ENCODE measurements at regions of chr1 and their contacts with region 1.

Region 1: DNA sequence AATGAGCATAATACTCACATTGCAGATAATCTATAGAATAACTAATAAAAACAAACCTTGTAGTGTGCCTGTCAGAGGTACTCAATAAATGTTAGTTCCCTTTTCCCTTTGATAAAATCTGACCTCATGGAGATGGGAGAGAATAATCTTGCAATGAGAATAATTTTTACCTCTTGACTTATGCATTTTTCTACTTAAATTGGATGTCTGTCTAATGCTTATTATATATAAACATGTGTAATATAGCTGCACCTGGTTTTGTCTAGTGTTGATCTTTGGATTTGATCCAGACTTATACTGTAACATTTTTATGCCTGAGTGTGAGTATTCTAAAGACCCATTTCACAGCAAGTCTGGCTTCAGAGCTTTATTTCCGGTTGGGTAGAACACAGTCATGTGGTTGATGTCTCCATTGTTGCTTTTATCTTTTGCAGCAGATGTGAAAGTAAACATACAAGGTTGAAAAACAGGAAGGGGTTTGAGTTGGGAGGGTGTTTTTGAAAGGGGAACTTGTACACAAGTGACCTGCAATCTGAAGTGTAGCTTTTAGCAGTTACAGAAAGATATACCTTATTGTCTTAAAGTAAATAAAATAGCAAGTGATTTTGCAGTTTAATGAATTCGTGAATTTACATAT is 12.4 kb downstream of the EPB41 start:
- DNase-seq: peak; percentile 23
- H3K4me3 Mint-ChIP-seq: peak overlapping the region; percentile 57
- H3K27ac Mint-ChIP-seq: peak overlapping the region; percentile 85
- H3K4me1 Mint-ChIP-seq: peaks cover 55% of the 10 kb centered on the region
- H3K27me3 Mint-ChIP-seq: no peaks in the 10 kb centered on the region

Region 2: GRCh38 chr1:28392027-28392652 is 534.6 kb before region 1 on chr1:
- CTCF ChIA-PET with region 1: no interaction called
- POLR2A ChIA-PET with region 1: no interaction called
- intact Hi-C with region 1: no loop called
- DNase-seq: no peak
- H3K4me3 Mint-ChIP-seq: no peak overlapping the region
- H3K27ac Mint-ChIP-seq: no peak overlapping the region
- H3K4me1 Mint-ChIP-seq: peaks cover 4% of the 10 kb centered on the region
- H3K27me3 Mint-ChIP-seq: no peaks in the 10 kb centered on the region

Region 3: GRCh38 chr1:28804071-28804470 is 122.7 kb before region 1 on chr1:
- CTCF ChIA-PET with region 1: no interaction called
- POLR2A ChIA-PET with region 1: no interaction called
- intact Hi-C with region 1: no loop called
- DNase-seq: no peak
- H3K4me3 Mint-ChIP-seq: no peak overlapping the region
- H3K27ac Mint-ChIP-seq: no peak overlapping the region
- H3K4me1 Mint-ChIP-seq: no peaks in the 10 kb centered on the region
- H3K27me3 Mint-ChIP-seq: peaks cover 1% of the 10 kb centered on the region

Region 4: GRCh38 chr1:28855469-28855951 is 71.2 kb before region 1 on chr1:
- CTCF ChIA-PET with region 1: no interaction called
- POLR2A ChIA-PET with region 1: no interaction called
- intact Hi-C with region 1: no loop called
- DNase-seq: no peak
- H3K4me3 Mint-ChIP-seq: no peak overlapping the region
- H3K27ac Mint-ChIP-seq: no peak overlapping the region
- H3K4me1 Mint-ChIP-seq: no peaks in the 10 kb centered on the region
- H3K27me3 Mint-ChIP-seq: peaks cover 6% of the 10 kb centered on the region

Region 5: GRCh38 chr1:28914228-28915030 is 12.3 kb before region 1 on chr1 and contains the start of gene EPB41:
- CTCF ChIA-PET with region 1: interaction called, 3 read pairs
- POLR2A ChIA-PET with region 1: interaction called, 13 read pairs
- intact Hi-C with region 1: loop called (anchors 1 kb)
- DNase-seq: peak; percentile 93
- H3K4me3 Mint-ChIP-seq: peak within 1 kb of the TSS; percentile 98
- H3K27ac Mint-ChIP-seq: peak within 1 kb of the TSS; percentile 93
- H3K4me1 Mint-ChIP-seq: peaks cover 50% of the 10 kb centered on the region
- H3K27me3 Mint-ChIP-seq: no peaks in the 10 kb centered on the region
- total RNA-seq, gene EPB41: 67.6 to 71.0 TPM

Region 6: DNA sequence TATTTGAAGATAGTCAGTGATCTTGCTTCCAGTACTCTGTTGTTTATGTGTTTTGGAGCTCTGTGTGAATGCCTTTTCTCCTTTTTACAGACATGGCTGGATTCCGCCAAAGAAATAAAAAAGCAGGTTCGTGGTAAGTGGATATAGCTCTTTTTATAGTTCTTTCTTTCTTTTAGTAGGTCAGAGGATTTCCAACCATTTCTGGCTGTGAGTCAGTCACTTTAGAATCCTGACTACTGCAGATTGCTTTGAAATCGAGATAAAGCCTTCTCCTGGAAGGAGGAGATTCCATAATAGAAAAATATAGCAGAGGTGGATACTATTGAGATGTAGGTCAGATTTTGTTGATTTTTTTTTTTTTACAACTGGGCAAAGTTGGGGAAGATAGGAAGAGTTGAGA is 85.0 kb after region 1 on chr1:
- CTCF ChIA-PET with region 1: no interaction called
- POLR2A ChIA-PET with region 1: no interaction called
- intact Hi-C with region 1: no loop called
- DNase-seq: no peak
- H3K4me3 Mint-ChIP-seq: no peak overlapping the region
- H3K27ac Mint-ChIP-seq: no peak overlapping the region
- H3K4me1 Mint-ChIP-seq: peaks cover 11% of the 10 kb centered on the region
- H3K27me3 Mint-ChIP-seq: no peaks in the 10 kb centered on the region